Endothelial cell of umbilical vein (primary cell): ENCODE measurements at regions of chr5 and their contacts with region 1.

Region 1: DNA sequence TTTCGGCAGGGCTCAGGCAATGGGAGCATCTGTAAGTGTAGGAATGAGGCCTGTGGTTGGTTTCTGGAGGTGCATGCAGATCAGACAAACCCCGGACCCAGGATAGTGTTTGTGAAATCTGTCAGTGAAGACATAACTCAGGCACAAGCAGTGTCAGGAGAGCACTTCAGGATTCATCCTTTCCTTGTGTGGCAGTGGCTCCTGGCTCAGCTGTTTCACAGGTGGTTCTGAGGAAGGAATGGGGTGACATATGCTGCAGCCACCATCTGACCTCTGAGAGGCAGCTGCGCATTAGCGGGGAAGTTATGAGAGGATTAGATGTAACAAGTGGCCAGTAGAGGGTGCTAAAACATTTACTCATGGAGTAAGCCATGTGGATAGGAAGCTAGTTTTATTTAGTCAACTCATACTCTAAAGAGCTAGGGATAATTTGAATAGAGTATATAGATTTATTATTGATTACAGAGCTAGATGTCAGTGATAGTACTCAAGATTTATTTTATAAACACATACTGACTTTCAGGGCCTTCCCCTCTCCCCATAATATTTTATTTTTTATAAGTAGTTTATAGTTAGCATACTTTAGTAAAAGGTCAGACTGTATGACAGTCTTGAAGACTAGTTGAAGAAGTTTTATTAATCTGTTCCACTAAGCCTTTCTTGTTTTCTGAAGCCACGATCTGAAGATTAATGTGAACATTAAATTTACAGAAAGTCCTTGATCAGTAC is 28.4 kb downstream of the NNT start:
- DNase-seq: peak; percentile 72
- H3K4me3 ChIP-seq: no peak overlapping the region
- H3K27ac ChIP-seq: no peak overlapping the region
- H3K4me1 ChIP-seq: no peaks in the 10 kb centered on the region
- H3K27me3 ChIP-seq: no peaks in the 10 kb centered on the region
- CTCF ChIP-seq: peak; percentile 59 to 68
- POLR2A ChIP-seq: no peak

Region 2: DNA sequence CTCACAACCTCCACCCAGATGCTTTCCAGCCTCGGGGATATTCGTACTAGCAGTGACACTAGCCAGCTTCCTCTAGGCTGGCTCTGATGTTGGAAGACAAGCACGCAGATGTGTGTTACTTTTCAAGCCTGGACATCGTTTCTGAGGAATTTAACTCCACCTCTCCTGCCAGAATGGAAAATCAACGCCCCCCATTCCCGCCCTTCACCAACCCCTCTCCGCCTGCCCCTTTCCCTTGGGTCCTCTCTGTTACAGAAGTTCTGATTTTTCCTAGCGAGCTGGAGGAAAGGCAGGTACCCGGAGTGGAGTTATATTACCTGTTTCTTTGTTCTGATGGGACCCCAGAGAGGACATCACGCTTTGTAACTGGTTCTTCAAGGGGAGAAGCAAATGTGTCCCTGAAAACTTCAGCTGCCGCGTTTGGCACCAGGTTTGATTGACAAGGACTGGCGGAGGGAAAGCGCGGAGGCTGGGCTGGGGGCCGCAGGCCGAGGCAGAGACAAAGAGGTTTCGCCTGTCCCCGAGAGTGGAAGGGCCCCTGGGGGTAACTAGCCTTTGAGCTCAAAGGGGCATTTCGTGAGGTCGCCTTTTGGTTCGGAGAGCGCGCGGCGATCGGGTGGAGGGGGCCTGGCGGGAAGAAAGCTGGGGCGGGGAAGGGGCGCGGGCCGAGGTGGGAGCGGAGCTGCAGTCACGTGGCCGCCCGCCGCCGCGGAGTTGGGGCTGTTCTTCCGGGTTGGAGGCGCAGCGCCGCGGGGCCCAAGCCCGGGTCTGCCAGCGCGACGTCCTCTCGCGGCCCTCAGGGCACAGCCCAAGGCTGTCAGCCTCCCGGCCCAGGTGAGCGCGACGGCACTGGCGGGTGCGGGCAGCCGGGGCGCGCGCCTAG is 28.6 kb before region 1 on chr5 and contains the start of gene NNT:
- CTCF ChIA-PET with region 1: interaction called, 26 read pairs
- POLR2A ChIA-PET with region 1: no interaction called
- dilution Hi-C with region 1: no loop called
- intact Hi-C with region 1: no loop called
- DNase-seq: peak; percentile 70
- H3K4me3 ChIP-seq: peak within 1 kb of the TSS; percentile 53 to 86 (median 80)
- H3K27ac ChIP-seq: peak within 1 kb of the TSS; percentile 88
- H3K4me1 ChIP-seq: peaks cover 19% of the 10 kb centered on the region
- H3K27me3 ChIP-seq: no peaks in the 10 kb centered on the region
- CTCF ChIP-seq: no peak
- POLR2A ChIP-seq: no peak
- total RNA-seq, gene NNT: 75.6 and 82.5 TPM in 2 replicates

Region 3: DNA sequence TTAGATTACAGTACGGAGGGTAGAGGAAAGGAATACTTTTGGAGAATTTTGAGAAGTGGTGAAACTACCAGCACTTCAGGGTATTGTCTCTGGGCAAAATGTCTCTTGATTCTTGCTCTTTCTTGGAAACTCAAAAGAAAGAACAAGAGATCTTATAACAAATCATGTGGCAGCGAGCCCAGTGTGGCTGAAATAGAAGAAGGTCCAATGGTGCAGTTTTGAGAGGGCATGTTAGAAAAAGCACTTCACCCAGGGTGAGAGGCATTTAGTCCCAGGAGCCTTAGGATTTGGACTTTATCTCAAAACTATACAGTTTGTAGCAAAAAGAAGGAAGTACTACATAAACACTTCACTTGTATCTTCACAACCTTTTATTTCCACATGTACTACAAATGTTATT is 11.1 kb after region 1 on chr5:
- CTCF ChIA-PET with region 1: interaction called, 31 read pairs
- POLR2A ChIA-PET with region 1: interaction called, 3 read pairs
- dilution Hi-C with region 1: no loop called
- intact Hi-C with region 1: no loop called
- DNase-seq: no peak
- H3K4me3 ChIP-seq: no peak overlapping the region
- H3K27ac ChIP-seq: no peak overlapping the region
- H3K4me1 ChIP-seq: no peaks in the 10 kb centered on the region
- H3K27me3 ChIP-seq: no peaks in the 10 kb centered on the region
- CTCF ChIP-seq: no peak
- POLR2A ChIP-seq: no peak

Region 4: GRCh38 chr5:43661102-43661501 is 29.8 kb after region 1 on chr5:
- CTCF ChIA-PET with region 1: interaction called, 10 read pairs
- POLR2A ChIA-PET with region 1: no interaction called
- dilution Hi-C with region 1: no loop called
- intact Hi-C with region 1: no loop called
- DNase-seq: no peak
- H3K4me3 ChIP-seq: no peak overlapping the region
- H3K27ac ChIP-seq: no peak overlapping the region
- H3K4me1 ChIP-seq: no peaks in the 10 kb centered on the region
- H3K27me3 ChIP-seq: no peaks in the 10 kb centered on the region
- CTCF ChIP-seq: peak in 1 of 2 donors; percentile 18
- POLR2A ChIP-seq: no peak

Region 5: GRCh38 chr5:43729846-43730478 is 98.6 kb after region 1 on chr5:
- CTCF ChIA-PET with region 1: interaction called, 12 read pairs
- POLR2A ChIA-PET with region 1: no interaction called
- dilution Hi-C with region 1: no loop called
- intact Hi-C with region 1: no loop called
- DNase-seq: peak; percentile 18
- H3K4me3 ChIP-seq: no peak overlapping the region
- H3K27ac ChIP-seq: no peak overlapping the region
- H3K4me1 ChIP-seq: no peaks in the 10 kb centered on the region
- H3K27me3 ChIP-seq: peaks cover 2 to 7% of the 10 kb centered on the region in 2 experiments
- CTCF ChIP-seq: peak; percentile 16 to 20
- POLR2A ChIP-seq: no peak

Region 6: DNA sequence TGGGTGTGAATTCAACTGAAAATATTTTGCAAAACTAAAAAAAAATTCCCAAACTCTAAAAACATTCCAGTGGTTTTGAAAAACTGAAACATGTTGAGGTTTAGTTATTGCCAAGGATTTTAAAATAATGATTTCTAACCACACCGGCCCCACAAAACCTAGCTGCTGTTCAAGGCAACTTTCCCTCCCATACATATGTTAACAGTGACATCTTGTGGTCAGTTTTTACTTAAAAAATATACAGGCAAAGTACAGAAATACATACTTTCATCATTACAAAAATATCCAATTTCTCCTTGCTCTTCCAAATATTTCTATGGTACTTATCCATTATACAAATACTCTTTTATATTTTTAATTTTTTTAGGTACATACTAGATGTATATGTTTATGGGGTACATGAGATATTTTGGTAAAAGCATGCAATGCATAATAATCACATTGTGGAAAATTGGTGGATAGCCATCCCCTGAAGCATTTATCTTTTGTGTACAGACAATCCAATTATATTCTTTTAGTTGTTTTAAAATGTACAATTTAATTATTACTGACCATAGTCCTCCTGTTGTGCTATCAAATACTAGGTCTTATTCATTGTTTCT is 1143.0 kb after region 1 on chr5:
- CTCF ChIA-PET with region 1: interaction called, 45 read pairs
- POLR2A ChIA-PET with region 1: no interaction called
- dilution Hi-C with region 1: no loop called
- intact Hi-C with region 1: loop called (anchors 10 kb)
- DNase-seq: peak; percentile 48
- H3K4me3 ChIP-seq: no peak overlapping the region
- H3K27ac ChIP-seq: no peak overlapping the region
- H3K4me1 ChIP-seq: no peaks in the 10 kb centered on the region
- H3K27me3 ChIP-seq: no peaks in the 10 kb centered on the region
- CTCF ChIP-seq: peak in 1 of 2 donors; percentile 21
- POLR2A ChIP-seq: no peak